ENCODE measurements at regions of chr4 and their contacts with region 1.

Region 1: GRCh38 chr4:61741327-61742096 is 541.4 kb downstream of the ADGRL3 start:
- DNase-seq: no peak
- ATAC-seq: no peak
- H3K4me3 ChIP-seq: no peak overlapping the region
- H3K27ac ChIP-seq: no peak overlapping the region
- H3K4me1 ChIP-seq: no peaks in the 10 kb centered on the region
- H3K27me3 ChIP-seq: no peaks in the 10 kb centered on the region
- CTCF ChIP-seq: no peak; a peak in 1 of 6 replicates
- EP300 ChIP-seq: no peak
- POLR2A ChIP-seq: no peak
- RAD21 ChIP-seq: no peak

Region 2: GRCh38 chr4:61590881-61591280 is 150.6 kb before region 1 on chr4:
- CTCF ChIA-PET with region 1: no interaction called
- POLR2A ChIA-PET with region 1: no interaction called
- RAD21 ChIA-PET with region 1: no interaction called
- SMC1A ChIA-PET with region 1: no interaction called
- in situ Hi-C with region 1: no loop called
- intact Hi-C with region 1: no loop called
- DNase-seq: no peak
- ATAC-seq: no peak
- H3K4me3 ChIP-seq: no peak overlapping the region
- H3K27ac ChIP-seq: no peak overlapping the region
- H3K4me1 ChIP-seq: no peaks in the 10 kb centered on the region
- H3K27me3 ChIP-seq: no peaks in the 10 kb centered on the region
- CTCF ChIP-seq: no peak; a peak in 1 of 6 replicates
- EP300 ChIP-seq: no peak
- POLR2A ChIP-seq: no peak
- RAD21 ChIP-seq: no peak

Region 3: GRCh38 chr4:61648264-61648663 is 93.2 kb before region 1 on chr4:
- CTCF ChIA-PET with region 1: no interaction called
- POLR2A ChIA-PET with region 1: no interaction called
- RAD21 ChIA-PET with region 1: no interaction called
- SMC1A ChIA-PET with region 1: no interaction called
- in situ Hi-C with region 1: no loop called
- intact Hi-C with region 1: no loop called
- DNase-seq: no peak
- ATAC-seq: no peak
- H3K4me3 ChIP-seq: no peak overlapping the region
- H3K27ac ChIP-seq: no peak overlapping the region
- H3K4me1 ChIP-seq: no peaks in the 10 kb centered on the region
- H3K27me3 ChIP-seq: no peaks in the 10 kb centered on the region
- CTCF ChIP-seq: no peak
- EP300 ChIP-seq: no peak
- POLR2A ChIP-seq: no peak
- RAD21 ChIP-seq: no peak

Region 4: GRCh38 chr4:61924131-61924530 is 182.6 kb after region 1 on chr4:
- CTCF ChIA-PET with region 1: interaction called, 26 read pairs
- POLR2A ChIA-PET with region 1: no interaction called
- RAD21 ChIA-PET with region 1: interaction called, 7 read pairs
- SMC1A ChIA-PET with region 1: interaction called, 9 read pairs
- in situ Hi-C with region 1: no loop called
- intact Hi-C with region 1: no loop called
- DNase-seq: no peak
- ATAC-seq: 0 out of 3 replicates have a peak, but pooled peaks have one; percentile 33
- H3K4me3 ChIP-seq: no peak overlapping the region
- H3K27ac ChIP-seq: no peak overlapping the region
- H3K4me1 ChIP-seq: no peaks in the 10 kb centered on the region
- H3K27me3 ChIP-seq: no peaks in the 10 kb centered on the region
- CTCF ChIP-seq: no peak; a peak in 1 of 6 replicates
- EP300 ChIP-seq: no peak
- POLR2A ChIP-seq: no peak
- RAD21 ChIP-seq: no peak